Activated CD8-positive, alpha-beta memory T cell treated with anti-CD3 and anti-CD28 coated beads, Interleukin-2, amount 10 ng/mL, durations not matched to agents 7 days and 5 days (primary cell): ENCODE measurements at regions of chr5 and their contacts with region 1.

Region 1: GRCh38 chr5:43040287-43041098 is at the start of gene ANXA2R:
- DNase-seq: peak; percentile 98
- ATAC-seq: peak; percentile 55
- H3K4me3 Mint-ChIP-seq: peak within 1 kb of the TSS; percentile 94
- H3K27ac Mint-ChIP-seq: peak within 1 kb of the TSS; percentile 100
- H3K4me1 Mint-ChIP-seq: peaks cover 43% of the 10 kb centered on the region
- H3K27me3 Mint-ChIP-seq: no peaks in the 10 kb centered on the region
- total RNA-seq, gene ANXA2R: 14.5 to 32.0 TPM

Region 2: DNA sequence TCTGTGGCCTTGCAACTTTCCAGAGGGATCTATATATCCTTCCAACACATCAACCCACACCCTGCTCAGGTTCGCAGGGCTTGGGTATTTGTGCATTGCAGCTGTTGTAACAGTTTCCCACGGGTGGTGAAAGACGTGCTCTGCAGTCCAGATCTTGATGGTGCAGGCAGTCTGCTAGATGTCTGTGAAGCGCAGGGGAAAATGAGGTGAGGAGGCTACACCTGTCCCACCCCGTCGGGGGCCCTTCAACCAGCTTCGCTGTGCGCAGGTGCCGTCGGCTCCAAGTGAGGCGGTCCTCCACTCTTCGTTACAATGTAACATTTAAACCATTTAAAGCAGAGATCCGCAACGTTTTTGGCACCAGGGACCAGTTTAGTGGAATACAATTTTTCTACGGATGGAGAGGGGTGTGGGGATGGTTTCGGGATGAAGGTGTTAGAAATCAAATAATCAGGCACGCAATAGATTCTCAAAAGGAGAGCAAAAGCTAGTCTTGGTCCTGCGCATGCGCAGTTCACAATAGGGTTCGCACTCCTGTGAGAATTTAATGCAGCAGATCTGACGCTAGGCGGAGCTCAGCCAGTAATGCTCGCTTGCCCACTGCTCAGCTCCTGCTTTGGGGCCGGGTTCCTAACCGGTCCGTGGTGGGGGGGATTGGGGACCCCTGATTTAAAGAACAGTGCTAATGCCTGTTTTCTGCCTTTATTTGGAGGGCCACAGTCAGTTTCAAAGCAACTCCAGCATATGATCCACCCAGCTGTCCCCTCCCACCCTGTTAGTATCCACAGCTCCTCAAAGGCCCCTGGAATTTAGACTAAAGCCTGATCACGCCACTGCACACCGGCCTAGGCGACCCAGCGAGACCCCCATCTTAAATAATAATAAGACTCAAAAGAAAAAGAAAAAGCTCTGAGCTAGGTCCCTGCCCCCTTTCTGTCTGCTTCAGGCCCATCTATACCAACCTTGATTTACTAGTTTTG is 131.7 kb before region 1 on chr5:
- CTCF ChIA-PET with region 1: interaction called, 14 read pairs
- DNase-seq: peak; percentile 94
- ATAC-seq: peak; percentile 95
- H3K4me3 Mint-ChIP-seq: peak overlapping the region; percentile 90
- H3K27ac Mint-ChIP-seq: peak overlapping the region; percentile 79
- H3K4me1 Mint-ChIP-seq: peaks cover 17% of the 10 kb centered on the region
- H3K27me3 Mint-ChIP-seq: peaks cover 30% of the 10 kb centered on the region

Region 3: DNA sequence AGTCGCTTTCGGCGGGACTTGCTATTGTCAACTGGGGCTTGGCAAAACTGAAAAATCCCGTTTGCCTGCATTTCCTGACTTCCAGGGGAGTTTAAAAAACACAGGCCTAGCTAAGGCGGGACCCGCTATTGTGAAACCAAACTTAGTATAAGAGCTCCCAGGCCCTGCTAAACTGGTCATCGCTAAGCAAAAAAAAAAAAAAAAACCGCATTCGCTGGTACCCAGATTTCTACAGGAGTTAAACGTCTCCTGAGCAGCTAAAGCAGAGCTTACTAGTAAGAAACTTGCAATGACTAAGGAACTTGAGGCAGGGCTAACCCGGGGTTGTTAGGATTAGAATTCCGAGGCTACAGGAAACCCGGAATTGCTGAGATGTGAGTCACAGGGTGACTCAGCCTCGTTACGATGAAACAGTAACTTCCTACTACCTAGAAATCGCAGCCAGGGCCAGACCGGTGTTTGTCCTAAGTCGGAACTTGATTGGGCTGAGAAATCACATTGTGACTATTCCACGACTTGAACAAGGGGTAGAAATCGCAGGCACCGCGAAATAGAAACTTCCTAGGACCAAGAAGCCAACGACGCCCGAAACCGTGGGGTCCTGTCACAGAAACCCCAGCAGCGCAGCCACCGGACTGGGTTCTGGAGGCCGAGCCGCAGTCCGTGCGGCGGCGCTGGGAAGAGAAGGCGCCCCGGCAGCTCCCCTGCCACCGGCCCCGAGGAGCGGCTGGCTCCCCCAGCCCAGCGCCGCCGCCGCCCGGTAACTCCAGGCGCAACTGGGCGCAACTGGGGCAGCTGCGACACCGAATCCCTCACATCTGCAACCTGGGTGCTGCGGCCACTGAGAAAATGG is 89.8 kb before region 1 on chr5:
- CTCF ChIA-PET with region 1: interaction called, 51 read pairs
- DNase-seq: peak; percentile 85
- ATAC-seq: peak; percentile 60
- H3K4me3 Mint-ChIP-seq: peak overlapping the region; percentile 83
- H3K27ac Mint-ChIP-seq: peak overlapping the region; percentile 99
- H3K4me1 Mint-ChIP-seq: peaks cover 33% of the 10 kb centered on the region
- H3K27me3 Mint-ChIP-seq: no peaks in the 10 kb centered on the region

Region 4: GRCh38 chr5:42994246-42995151 is 46.0 kb before region 1 on chr5:
- CTCF ChIA-PET with region 1: interaction called, 160 read pairs
- DNase-seq: peak; percentile 94
- ATAC-seq: peak; percentile 61
- H3K4me3 Mint-ChIP-seq: peak overlapping the region; percentile 94
- H3K27ac Mint-ChIP-seq: peak overlapping the region; percentile 100
- H3K4me1 Mint-ChIP-seq: peaks cover 16% of the 10 kb centered on the region
- H3K27me3 Mint-ChIP-seq: no peaks in the 10 kb centered on the region

Region 5: DNA sequence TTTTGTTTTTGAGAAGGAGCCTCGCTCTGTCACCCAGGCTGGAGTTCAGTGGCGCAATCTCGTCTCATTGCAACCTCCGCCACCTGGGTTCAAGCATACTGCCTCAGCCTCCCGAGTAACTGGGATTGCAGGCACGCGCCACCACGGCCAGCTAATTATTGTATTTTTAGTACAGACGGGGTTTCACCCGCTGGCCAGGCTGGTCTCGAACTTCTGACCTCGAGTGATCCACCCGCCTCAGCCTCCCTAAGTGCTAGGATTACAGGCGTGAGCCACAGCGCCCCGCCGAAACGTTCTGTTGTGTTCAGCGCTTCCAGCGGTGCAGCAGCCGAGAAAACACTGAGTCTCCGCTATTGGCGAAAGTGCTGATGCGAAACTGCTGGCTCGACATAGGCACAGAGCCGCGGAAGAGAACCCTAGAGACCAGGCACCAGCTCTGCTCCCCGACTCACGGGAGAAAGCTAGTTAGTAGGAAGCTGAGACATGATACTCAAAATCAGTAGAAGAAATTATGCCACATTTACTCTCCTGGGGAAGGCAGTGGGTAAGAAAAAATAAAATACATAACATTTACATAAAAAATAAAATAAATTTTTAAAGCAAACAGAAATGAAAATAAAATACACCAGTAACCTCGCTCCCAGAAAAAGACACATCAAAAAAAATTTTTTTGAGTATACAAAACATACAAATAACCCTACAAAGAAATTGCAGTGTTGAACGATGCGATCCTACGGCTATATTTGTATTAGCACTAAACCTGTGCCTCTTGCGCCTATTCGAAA is 31.9 kb before region 1 on chr5:
- CTCF ChIA-PET with region 1: interaction called, 28 read pairs
- DNase-seq: peak; percentile 95
- ATAC-seq: peak; percentile 65
- H3K4me3 Mint-ChIP-seq: peak overlapping the region; percentile 90
- H3K27ac Mint-ChIP-seq: peak overlapping the region; percentile 97
- H3K4me1 Mint-ChIP-seq: peaks cover 37% of the 10 kb centered on the region
- H3K27me3 Mint-ChIP-seq: peaks cover 2% of the 10 kb centered on the region

Region 6: GRCh38 chr5:43066799-43067741 is 26.6 kb after region 1 on chr5:
- CTCF ChIA-PET with region 1: interaction called, 85 read pairs
- DNase-seq: peak; percentile 93
- ATAC-seq: peak; percentile 63
- H3K4me3 Mint-ChIP-seq: peak overlapping the region; percentile 99
- H3K27ac Mint-ChIP-seq: peak overlapping the region; percentile 97
- H3K4me1 Mint-ChIP-seq: peaks cover 41% of the 10 kb centered on the region
- H3K27me3 Mint-ChIP-seq: no peaks in the 10 kb centered on the region

Region 7: GRCh38 chr5:43120720-43121564 is 80.4 kb after region 1 on chr5 and contains the start of gene ZNF131:
- CTCF ChIA-PET with region 1: interaction called, 12 read pairs
- DNase-seq: peak; percentile 97
- ATAC-seq: peak; percentile 88
- H3K4me3 Mint-ChIP-seq: peak within 1 kb of the TSS; percentile 87
- H3K27ac Mint-ChIP-seq: peak within 1 kb of the TSS; percentile 93
- H3K4me1 Mint-ChIP-seq: peaks cover 38% of the 10 kb centered on the region
- H3K27me3 Mint-ChIP-seq: no peaks in the 10 kb centered on the region
- total RNA-seq, gene ZNF131: 39.9 to 56.2 TPM